MCF 10A (cell line): ENCODE measurements at regions of chr4 and their contacts with region 1.

Region 1: DNA sequence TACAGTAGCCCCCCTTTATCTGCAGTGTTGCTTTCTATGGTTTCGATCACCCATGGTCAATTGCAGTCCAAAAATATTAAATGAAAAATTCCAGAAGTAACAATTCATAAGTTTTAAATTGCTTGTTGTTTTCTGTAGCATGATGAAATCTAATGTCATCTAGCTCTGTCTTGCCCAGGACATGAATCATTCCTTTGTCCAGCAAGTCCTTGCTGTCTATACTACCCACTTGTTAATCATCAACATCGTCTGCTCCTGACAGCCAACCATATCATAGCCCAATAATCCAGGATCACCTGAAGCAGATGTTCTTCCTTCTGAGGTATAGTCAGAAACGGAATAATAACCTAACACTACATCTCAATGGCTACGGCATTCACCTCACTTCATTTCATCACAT is 79.8 kb downstream of the ADAMTS3 start:
- DNase-seq: peak; percentile 69
- H3K4me3 Mint-ChIP-seq: no peak overlapping the region
- H3K27ac Mint-ChIP-seq: peak overlapping the region; percentile 93
- H3K4me1 Mint-ChIP-seq: peaks cover 30% of the 10 kb centered on the region
- H3K27me3 Mint-ChIP-seq: no peaks in the 10 kb centered on the region
- CTCF ChIP-seq: no peak

Region 2: DNA sequence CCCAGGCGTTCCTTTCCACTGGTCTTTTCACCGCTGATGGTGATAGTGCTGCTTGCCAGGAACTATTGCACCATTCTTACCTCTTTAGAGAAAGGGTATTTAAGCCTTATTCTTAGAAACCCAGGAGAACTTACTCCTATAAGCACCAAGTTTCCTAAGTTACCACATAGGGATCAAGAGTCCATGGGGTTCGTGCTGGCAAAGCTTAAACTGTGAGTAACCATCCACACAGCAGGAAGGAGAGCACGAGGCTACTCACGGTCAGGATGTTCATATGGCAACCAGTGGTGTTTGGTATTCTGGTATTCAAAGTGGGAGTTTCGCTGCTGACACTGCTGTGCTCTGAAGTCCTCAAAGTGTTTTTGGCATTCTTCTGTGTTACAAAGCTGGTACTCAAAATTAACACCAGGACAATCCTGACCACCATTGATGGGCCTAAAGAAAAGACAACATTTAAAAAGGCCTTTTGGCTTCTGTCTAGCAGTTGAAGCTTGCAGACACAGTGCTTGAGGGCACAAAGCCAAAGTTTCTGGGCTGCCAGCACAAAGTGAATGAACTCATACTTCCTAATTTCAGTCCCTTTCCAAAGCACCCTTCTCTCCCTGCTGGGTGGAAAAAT is 177.1 kb before region 1 on chr4:
- CTCF ChIA-PET with region 1: no interaction called
- POLR2A ChIA-PET with region 1: interaction called, 8 read pairs
- intact Hi-C with region 1: loop called (anchors 5 kb)
- DNase-seq: peak; percentile 98
- H3K4me3 Mint-ChIP-seq: peak overlapping the region; percentile 56
- H3K27ac Mint-ChIP-seq: peak overlapping the region; percentile 95
- H3K4me1 Mint-ChIP-seq: peaks cover 26% of the 10 kb centered on the region
- H3K27me3 Mint-ChIP-seq: no peaks in the 10 kb centered on the region
- CTCF ChIP-seq: no peak